H1 (cell line): ENCODE measurements at regions of chr16 and their contacts with region 1.

Region 1: DNA sequence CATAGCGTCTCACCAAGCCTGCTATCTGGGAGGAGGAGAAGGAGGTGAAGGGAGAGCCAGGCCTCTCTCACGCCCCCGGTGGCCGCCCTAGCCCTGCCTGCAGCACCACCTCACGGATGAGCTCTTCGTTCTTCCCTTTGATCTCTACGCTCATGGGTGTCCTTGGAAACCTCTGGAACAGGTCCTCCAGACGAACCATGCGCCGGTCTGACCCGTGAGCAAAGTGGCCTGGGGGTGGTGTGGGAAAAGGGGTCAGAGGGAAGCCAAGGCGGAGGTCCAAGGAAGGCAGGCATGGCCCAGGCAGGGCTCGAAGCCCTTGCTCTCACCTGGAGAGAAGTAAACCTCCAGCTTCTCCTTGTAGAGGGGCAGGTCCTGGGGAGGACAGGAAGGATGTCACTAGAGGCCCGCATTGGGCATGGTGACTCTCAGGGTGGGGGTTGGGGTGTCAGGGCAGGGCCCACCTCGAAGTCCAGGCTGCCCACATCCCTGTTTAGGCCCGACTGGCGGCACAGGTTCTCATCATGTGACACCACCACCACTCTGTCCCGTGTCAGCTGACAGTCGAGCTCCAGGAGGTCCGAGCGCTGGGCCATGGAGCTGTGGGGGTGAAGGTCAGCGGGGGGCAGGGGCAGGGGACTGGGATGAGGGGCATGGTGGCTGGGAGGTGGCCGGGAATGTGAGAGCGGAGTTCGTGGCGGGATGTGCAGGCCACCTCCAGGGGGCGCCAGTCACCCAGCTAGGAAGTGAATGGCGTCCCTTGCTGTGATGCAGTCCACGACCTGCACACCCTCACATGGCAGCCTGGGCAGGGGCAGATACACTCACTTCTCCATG is 923 bp downstream of the GDPD3 start:
- DNase-seq: peak in 1 of 2 experiments; percentile 94
- H3K4me3 ChIP-seq: peak overlapping the region in 1 of 4 experiments; percentile 24; a peak in 2 of 8 replicates
- H3K27ac ChIP-seq: no peak overlapping the region
- H3K4me1 ChIP-seq: peaks cover 0 to 12% (median 6%) of the 10 kb centered on the region in 4 experiments; a peak in 5 of 7 replicates
- H3K27me3 ChIP-seq: no peaks in the 10 kb centered on the region
- CTCF ChIP-seq: peak; percentile 82 to 98 (median 94)
- EP300 ChIP-seq: no peak
- POLR2A ChIP-seq: peak; percentile 20 to 29; a peak in 2 of 3 replicates
- RAD21 ChIP-seq: peak; percentile 72 to 75

Region 2: GRCh38 chr16:29891525-29892457 is 220.6 kb before region 1 on chr16:
- CTCF ChIA-PET with region 1: no interaction called
- POLR2A ChIA-PET with region 1: no interaction called
- DNase-seq: no peak
- H3K4me3 ChIP-seq: no peak overlapping the region
- H3K27ac ChIP-seq: no peak overlapping the region
- H3K4me1 ChIP-seq: no peaks in the 10 kb centered on the region
- H3K27me3 ChIP-seq: no peaks in the 10 kb centered on the region
- CTCF ChIP-seq: no peak
- EP300 ChIP-seq: no peak
- POLR2A ChIP-seq: no peak
- RAD21 ChIP-seq: no peak

Region 3: GRCh38 chr16:30052671-30053372 is 59.6 kb before region 1 on chr16:
- CTCF ChIA-PET with region 1: interaction called, 12 read pairs
- POLR2A ChIA-PET with region 1: no interaction called
- DNase-seq: peak in 1 of 2 experiments; percentile 98
- H3K4me3 ChIP-seq: peak overlapping the region; percentile 68 to 80 (median 78)
- H3K27ac ChIP-seq: no peak overlapping the region
- H3K4me1 ChIP-seq: peaks cover 0 to 4% (median 2%) of the 10 kb centered on the region in 4 experiments; a peak in 3 of 7 replicates
- H3K27me3 ChIP-seq: peaks cover 0 to 5% (median 2%) of the 10 kb centered on the region in 4 experiments; a peak in 2 of 7 replicates
- CTCF ChIP-seq: no peak
- EP300 ChIP-seq: peak in 1 of 2 experiments; percentile 51; a peak in 1 of 3 replicates
- POLR2A ChIP-seq: no peak
- RAD21 ChIP-seq: no peak

Region 4: DNA sequence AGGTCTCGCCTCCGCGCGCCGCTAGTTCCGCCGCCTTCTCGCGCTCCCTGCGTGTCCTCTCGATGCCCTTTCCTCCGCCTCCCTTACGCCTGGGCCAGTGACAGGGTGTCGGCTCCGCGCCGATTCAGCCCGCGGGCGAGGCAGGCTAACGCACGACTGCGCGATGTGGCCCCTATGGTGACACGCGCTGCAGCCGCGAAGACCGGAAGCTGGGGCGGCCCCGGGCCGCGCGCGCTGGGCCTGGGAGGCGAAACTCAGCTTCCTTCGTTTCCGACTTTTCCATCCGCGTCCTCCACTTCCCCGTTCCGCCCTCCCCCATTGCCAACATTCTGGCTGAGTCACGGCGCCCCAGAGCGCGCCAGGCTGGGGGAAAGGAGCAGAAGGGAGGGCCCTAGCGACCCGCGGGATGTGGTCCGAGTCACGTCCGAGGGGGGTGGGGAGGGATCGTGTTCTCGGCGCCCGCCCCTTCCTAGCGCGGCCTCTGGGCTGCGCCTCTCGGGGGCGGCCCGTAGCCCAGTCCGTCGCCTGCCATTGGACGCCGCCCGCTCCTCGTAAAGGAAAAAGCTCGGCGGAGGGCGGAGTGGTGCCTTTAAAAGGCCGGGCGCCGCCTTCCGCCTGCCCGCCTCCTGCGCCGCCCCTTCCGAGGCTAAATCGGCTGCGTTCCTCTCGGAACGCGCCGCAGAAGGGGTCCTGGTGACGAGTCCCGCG is 47.1 kb before region 1 on chr16 and contains the start of gene ALDOA:
- CTCF ChIA-PET with region 1: interaction called, 13 read pairs
- POLR2A ChIA-PET with region 1: interaction called, 3 read pairs
- DNase-seq: peak; percentile 89 to 92
- H3K4me3 ChIP-seq: peak within 1 kb of the TSS; percentile 71 to 92 (median 88)
- H3K27ac ChIP-seq: peak within 1 kb of the TSS; percentile 84
- H3K4me1 ChIP-seq: peaks cover 6 to 27% (median 15%) of the 10 kb centered on the region in 4 experiments
- H3K27me3 ChIP-seq: no peaks in the 10 kb centered on the region
- CTCF ChIP-seq: no peak
- EP300 ChIP-seq: no peak; a peak in 1 of 3 replicates
- POLR2A ChIP-seq: peak; percentile 93 to 95
- RAD21 ChIP-seq: no peak
- total RNA-seq, gene ALDOA: 1,083 and 1,146 TPM in 2 replicates

Region 5: GRCh38 chr16:30091474-30092372 is 20.7 kb before region 1 on chr16 and contains the start of gene TBX6:
- CTCF ChIA-PET with region 1: interaction called, 90 read pairs
- POLR2A ChIA-PET with region 1: interaction called, 169 read pairs
- DNase-seq: peak; percentile 73 to 97
- H3K4me3 ChIP-seq: peak within 1 kb of the TSS; percentile 55 to 84 (median 66)
- H3K27ac ChIP-seq: peak within 1 kb of the TSS; percentile 24; the same call in 1 of the 2 replicates
- H3K4me1 ChIP-seq: peaks cover 0 to 16% (median 10%) of the 10 kb centered on the region in 4 experiments; a peak in 6 of 7 replicates
- H3K27me3 ChIP-seq: 0 out of 7 replicates have a peak, but pooled peaks cover 0 to 3% (median 0%) of the 10 kb centered on the region in 4 experiments
- CTCF ChIP-seq: peak; percentile 75 to 76 (median 76)
- EP300 ChIP-seq: no peak
- POLR2A ChIP-seq: peak in 1 of 2 experiments; percentile 8; a peak in 1 of 3 replicates
- RAD21 ChIP-seq: peak; percentile 60 to 70
- total RNA-seq, gene TBX6: 2.3 and 2.8 TPM in 2 replicates

Region 6: GRCh38 chr16:30122604-30123160 is 10.3 kb after region 1 on chr16:
- CTCF ChIA-PET with region 1: interaction called, 30 read pairs
- POLR2A ChIA-PET with region 1: interaction called, 4 read pairs
- DNase-seq: no peak
- H3K4me3 ChIP-seq: peak overlapping the region; percentile 54 to 74 (median 62)
- H3K27ac ChIP-seq: no peak overlapping the region
- H3K4me1 ChIP-seq: peaks cover 0 to 6% (median 2%) of the 10 kb centered on the region in 4 experiments; a peak in 4 of 7 replicates
- H3K27me3 ChIP-seq: peaks cover 0 to 2% (median under 1%) of the 10 kb centered on the region in 4 experiments; a peak in 1 of 7 replicates
- CTCF ChIP-seq: no peak
- EP300 ChIP-seq: no peak
- POLR2A ChIP-seq: peak in 1 of 2 experiments; percentile 22; a peak in 1 of 3 replicates
- RAD21 ChIP-seq: no peak

Region 7: DNA sequence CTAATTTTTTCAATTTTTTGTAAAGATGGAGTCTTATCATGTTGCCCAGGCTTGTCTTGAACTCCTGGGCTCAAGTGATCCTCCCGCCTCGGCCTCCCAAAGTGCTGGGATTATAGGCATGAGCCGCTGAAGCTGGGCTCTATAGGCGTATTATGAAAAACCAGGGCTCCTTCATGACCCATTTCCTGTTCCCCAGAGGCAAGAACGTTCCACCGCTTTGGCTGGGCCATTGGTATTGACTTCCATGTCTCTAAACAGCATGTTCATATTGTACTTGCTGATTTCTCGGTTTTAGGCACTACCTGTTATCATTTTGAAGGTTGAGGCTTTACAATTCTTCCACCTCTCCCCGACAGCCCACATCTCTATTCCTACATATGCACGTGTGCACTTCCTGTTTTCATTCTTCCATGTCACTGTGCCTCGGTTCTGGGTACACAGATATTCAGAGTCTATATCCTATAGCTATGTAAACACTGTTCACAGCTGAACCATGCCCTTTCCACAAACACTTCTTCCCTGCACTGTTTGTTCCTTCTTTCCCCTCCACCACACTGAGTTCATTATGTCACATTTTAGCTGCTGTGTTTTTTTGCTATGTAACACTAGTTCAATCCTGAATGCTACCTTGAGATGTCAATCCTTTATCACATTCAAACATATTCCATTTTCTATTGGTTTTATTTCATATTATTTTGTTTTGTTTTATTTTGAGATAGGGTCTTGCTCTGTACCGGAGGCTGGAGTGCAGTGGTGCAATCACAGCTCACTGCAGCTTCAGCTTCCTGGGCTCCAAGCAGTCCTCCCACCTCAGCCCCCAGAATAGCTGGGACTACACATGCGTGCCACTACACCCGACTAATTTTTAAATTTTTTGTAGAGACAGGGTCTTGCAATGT is 27.4 kb after region 1 on chr16:
- CTCF ChIA-PET with region 1: interaction called, 27 read pairs
- POLR2A ChIA-PET with region 1: interaction called, 4 read pairs
- DNase-seq: no peak
- H3K4me3 ChIP-seq: no peak overlapping the region
- H3K27ac ChIP-seq: no peak overlapping the region
- H3K4me1 ChIP-seq: no peaks in the 10 kb centered on the region
- H3K27me3 ChIP-seq: no peaks in the 10 kb centered on the region
- CTCF ChIP-seq: no peak
- EP300 ChIP-seq: no peak
- POLR2A ChIP-seq: no peak
- RAD21 ChIP-seq: no peak

Region 8: GRCh38 chr16:30186782-30187555 is 74.6 kb after region 1 on chr16:
- CTCF ChIA-PET with region 1: interaction called, 21 read pairs
- POLR2A ChIA-PET with region 1: interaction called, 3 read pairs
- DNase-seq: peak in 1 of 2 experiments; percentile 94
- H3K4me3 ChIP-seq: no peak overlapping the region
- H3K27ac ChIP-seq: no peak overlapping the region
- H3K4me1 ChIP-seq: peaks cover 0 to 12% (median 4%) of the 10 kb centered on the region in 4 experiments; a peak in 4 of 7 replicates
- H3K27me3 ChIP-seq: peaks cover 0 to 14% (median 7%) of the 10 kb centered on the region in 4 experiments; a peak in 3 of 7 replicates
- CTCF ChIP-seq: peak; percentile 76 to 90 (median 90)
- EP300 ChIP-seq: no peak
- POLR2A ChIP-seq: no peak
- RAD21 ChIP-seq: peak; percentile 54 to 66